ENCODE measurements at regions of chr11 and their contacts with region 1.

Region 1: GRCh38 chr11:1694064-1694845 is 2.7 kb upstream of the KRTAP5-6 start:
- DNase-seq: peak; percentile 78 to 98 (median 90)

Region 2: GRCh38 chr11:1226986-1227545 is 467.2 kb before region 1 on chr11:
- intact Hi-C with region 1: no loop called
- DNase-seq: peak in 5 of 10 donors; percentile 2 to 78 (median 63)

Region 3: DNA sequence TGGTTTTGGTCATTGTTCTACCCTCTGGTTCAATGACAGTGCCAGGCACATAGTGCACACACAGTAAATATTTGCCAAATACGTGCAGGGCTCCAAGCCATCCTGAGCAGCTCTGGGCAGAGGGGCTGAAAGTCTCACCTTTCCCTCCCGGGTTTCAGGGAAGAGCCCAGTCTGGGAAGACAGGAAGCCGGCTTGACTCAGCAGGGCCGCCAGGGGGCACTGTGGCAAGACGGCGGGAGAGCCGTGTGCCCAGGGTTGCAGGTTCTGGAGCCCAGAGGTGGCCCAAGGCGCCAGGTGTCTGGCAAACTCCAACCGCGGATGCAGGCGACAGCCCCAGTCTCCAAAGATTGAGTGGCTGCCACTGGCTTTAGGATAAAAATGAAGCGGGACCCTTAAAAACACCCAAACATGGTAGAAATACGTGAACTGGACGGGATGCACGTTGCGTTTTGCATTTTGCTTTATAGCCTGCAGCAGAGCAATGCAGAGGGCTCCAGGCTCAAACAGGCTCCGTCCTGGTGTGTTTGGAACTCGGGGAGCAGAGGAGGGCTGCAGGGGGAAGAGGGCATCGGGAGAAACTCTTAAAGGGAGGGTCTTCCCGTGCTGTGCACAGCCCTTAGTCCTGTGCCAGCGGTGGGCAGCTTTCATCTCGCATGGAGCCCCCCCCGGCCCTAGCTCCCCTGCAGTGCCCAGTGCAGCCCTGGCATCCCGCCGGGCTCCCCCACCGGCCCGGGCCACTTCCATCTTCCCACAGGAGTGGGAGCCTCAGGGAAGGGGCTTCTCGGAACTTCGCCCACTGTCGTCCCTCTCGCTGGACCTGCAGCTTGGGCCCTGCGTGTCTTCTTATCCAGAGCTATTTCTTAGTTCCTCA is 53.9 kb before region 1 on chr11:
- intact Hi-C with region 1: no loop called
- DNase-seq: peak in 6 of 10 donors; percentile 27 to 91 (median 43)

Region 4: GRCh38 chr11:1652771-1653540 is 41.3 kb before region 1 on chr11:
- intact Hi-C with region 1: loop called (anchors 2 kb)
- DNase-seq: peak; percentile 70 to 98 (median 86)

Region 5: DNA sequence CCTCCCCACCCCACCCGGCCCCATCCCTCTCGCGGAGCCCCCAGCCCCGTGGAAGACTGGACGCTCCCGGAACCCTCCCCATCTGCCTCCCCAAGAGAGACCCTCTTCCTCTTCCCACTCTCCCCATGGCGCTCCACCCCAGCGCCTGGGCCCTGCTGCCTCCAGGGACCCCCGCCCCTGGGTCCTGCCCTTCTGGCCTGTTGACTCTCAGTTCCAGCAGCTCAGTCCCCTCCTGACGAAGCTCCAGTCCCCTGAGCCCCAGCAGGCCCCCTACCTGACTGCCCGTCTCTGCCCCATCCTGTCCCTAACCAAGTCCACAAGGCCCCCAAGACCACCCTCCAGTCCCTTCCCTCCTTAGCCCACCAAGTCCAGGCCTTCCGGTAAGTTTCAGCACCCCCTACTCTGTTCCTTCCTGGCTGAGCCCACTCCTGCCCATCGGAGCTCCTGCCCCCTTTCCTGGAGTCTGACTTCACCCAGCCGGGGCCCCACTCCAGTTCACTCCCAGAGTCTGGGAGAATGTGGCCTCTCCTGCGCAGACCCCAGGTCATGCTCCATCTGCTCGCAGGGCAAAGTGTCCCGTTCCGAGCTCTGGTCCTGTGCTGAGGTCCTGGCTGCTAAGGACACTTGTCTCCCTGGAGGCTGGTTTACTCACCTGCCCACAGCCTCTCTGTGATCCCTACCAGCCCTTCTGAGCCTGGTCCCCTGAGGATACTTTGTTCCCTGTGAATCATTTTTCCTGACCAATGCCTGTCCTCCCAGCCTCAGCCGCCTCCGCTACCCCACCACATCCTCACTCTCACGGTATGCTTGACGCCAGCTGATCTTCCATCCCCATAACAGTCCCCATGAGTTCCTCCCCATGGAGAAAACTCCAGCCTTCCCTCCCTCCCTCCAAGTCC is 55.4 kb after region 1 on chr11:
- intact Hi-C with region 1: loop called (anchors 10 kb)
- DNase-seq: peak in 4 of 10 donors; percentile 41 to 90 (median 88)

Region 6: DNA sequence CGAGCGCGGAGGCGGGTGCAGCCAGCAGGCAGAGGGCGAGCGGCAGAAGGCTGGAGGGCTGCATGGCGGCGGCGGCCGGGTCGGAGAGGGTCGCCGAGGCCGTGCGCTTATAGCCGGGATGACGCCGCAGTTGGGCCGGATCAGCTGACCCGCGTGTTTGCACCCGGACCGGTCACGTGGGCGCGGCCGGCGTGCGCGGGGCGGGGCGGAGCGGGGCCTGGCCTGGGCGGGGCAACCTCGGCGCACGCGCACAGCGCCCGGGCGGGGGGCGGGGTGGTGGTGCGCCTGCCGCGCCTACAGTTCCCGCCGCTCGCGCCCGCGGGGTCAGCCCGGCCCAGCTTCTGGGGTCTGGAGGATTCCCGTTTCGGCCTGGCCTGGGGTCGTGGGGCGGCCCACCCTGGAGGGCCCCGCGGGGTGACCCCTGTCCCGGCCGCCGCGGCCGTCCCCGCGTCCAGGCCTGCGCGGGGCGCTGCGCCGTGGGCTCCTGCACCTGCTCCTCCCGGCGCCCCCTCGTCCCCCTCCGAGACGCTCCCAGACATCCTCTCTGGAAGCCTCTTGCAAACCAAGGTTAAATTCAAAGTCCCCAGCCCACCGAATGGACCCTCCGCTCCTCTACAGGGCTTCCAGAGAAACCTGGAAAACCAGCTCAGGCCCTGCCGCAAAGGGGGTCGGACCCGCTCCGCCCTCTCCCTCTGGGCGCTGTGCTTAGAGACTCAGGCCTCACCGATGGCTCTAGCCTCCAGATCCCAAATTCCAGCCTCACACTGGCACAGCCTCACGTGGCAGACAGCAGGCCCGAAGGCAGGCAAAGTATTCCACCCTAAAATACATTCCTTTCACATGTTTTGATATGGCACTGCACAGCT is 69.8 kb after region 1 on chr11 and contains the start of gene CTSD:
- intact Hi-C with region 1: no loop called
- DNase-seq: peak; percentile 79 to 99 (median 89)

Region 7: DNA sequence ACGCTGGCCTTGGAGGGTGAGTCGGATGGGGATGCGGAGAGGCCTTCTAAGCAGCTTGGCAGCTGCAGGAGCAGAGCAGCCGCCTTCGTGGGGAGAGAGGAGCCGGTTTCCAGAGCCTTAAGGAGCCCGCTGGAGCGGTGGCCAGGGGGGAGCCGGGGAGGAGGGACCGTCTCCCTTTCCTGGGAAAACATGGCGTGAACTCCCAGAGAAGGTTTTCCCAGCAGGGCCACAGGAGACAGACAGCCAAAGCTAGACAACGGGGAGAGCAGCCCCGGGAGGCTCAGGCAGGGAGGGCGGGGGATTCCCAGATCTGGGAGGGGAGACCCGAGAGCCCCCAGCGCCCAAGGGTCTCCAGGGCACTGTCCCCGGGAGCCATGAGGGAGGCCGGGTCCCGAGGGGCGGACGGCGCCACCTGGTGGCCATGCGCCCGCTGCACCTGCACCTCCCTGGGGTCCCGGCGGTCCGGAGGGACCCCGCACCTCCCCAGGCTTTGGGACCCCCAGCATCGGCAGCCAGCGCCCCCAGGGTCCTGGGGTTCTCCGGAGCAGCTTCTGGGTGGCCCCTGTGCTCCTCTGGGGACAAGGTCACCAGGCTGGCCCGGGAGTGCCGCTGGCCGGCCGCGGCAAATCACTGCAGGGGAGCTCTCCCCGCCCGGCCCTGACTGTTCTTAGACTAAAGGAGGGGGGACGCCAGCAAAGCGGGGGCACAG is 138.1 kb after region 1 on chr11:
- intact Hi-C with region 1: loop called (anchors 1 kb)
- DNase-seq: peak in 9 of 10 donors; percentile 40 to 93 (median 68)

Region 8: DNA sequence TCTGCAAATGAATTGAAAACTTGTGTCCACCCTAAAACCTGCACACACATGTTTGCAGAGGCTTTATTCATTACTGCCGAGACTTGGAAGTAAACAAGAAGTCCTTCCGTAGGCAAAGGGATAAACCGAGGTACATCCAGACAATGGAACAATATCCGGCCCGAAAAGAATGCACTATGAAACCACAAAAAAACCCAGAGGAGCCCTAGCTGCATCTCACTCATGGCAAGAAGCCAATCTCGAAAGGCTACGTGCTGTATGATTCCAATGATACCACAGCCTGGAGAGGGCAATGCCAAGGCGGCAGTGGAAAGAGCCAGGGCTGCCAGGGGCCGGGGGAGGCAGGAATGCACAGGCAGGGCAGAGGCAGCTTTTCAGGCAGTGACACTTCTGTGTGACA is 249.7 kb after region 1 on chr11:
- intact Hi-C with region 1: loop called (anchors 5 kb)
- DNase-seq: peak in 4 of 10 donors; percentile 1 to 53 (median 30)

Region 9: GRCh38 chr11:2151500-2152257 is 457.4 kb after region 1 on chr11:
- intact Hi-C with region 1: loop called (anchors 2 kb)
- DNase-seq: peak; percentile 65 to 96 (median 84)

Measured in posterior cingulate gyrus (tissue), 11 donors.